ENCODE measurements at regions of chr3 and their contacts with region 1.

Region 1: GRCh38 chr3:56347219-56347871 is 120.9 kb downstream of the ERC2 start:
- DNase-seq: peak; percentile 71
- ATAC-seq: peak; percentile 47
- H3K4me3 Mint-ChIP-seq: no peak overlapping the region
- H3K27ac Mint-ChIP-seq: no peak overlapping the region
- H3K4me1 Mint-ChIP-seq: no peaks in the 10 kb centered on the region
- H3K27me3 Mint-ChIP-seq: peaks cover 8% of the 10 kb centered on the region

Region 2: DNA sequence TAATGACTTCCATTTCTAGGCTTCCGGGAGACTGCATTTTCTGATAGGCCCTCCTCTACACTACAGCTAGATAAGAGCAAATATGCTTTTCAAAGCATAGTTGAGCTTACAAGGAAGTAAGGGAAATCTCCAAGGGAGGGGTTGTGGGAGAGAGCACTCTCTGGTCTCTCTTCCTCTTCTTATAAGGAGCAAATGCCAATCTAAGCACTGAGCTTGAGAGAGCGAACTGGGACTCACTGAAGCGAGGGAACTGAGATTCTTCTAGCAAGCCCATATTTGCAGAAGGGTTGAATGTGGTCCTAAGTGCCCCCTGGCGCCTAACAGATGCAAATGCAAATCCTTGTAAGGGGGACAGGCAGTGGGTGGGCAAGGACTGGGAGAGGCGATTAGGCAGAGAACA is 43.9 kb before region 1 on chr3:
- CTCF ChIA-PET with region 1: no interaction called
- POLR2A ChIA-PET with region 1: no interaction called
- intact Hi-C with region 1: no loop called
- DNase-seq: peak; percentile 44
- ATAC-seq: no peak
- H3K4me3 Mint-ChIP-seq: no peak overlapping the region
- H3K27ac Mint-ChIP-seq: no peak overlapping the region
- H3K4me1 Mint-ChIP-seq: no peaks in the 10 kb centered on the region
- H3K27me3 Mint-ChIP-seq: peaks cover 24% of the 10 kb centered on the region

Region 3: GRCh38 chr3:56443372-56443771 is 96.0 kb after region 1 on chr3:
- CTCF ChIA-PET with region 1: no interaction called
- POLR2A ChIA-PET with region 1: no interaction called
- intact Hi-C with region 1: loop called in 1 of 2 experiments (anchors 1 kb)
- DNase-seq: no peak
- ATAC-seq: no peak
- H3K4me3 Mint-ChIP-seq: no peak overlapping the region
- H3K27ac Mint-ChIP-seq: no peak overlapping the region
- H3K4me1 Mint-ChIP-seq: no peaks in the 10 kb centered on the region
- H3K27me3 Mint-ChIP-seq: peaks cover 11% of the 10 kb centered on the region

Region 4: DNA sequence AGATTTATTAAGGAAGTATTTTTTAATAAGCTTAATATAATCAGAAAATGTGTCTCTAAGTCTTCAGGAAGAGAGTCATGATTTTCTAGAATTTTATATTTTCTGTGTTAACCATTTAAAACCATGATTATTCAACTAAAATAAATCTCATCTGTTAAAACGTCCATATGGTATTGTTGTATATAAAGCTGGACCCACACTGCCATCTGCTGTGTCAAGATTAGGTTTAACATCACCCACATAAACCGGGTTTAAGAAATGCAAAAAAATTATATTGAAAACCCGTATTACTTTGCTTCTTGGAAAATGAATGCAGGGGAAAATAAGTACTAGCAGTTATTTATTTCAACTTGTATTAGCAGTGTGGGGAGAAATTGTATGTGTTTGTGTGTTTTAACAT is 200.1 kb after region 1 on chr3:
- CTCF ChIA-PET with region 1: no interaction called
- POLR2A ChIA-PET with region 1: no interaction called
- intact Hi-C with region 1: loop called in 1 of 2 experiments (anchors 5 kb)
- DNase-seq: no peak
- ATAC-seq: no peak
- H3K4me3 Mint-ChIP-seq: no peak overlapping the region
- H3K27ac Mint-ChIP-seq: no peak overlapping the region
- H3K4me1 Mint-ChIP-seq: no peaks in the 10 kb centered on the region
- H3K27me3 Mint-ChIP-seq: peaks cover 7% of the 10 kb centered on the region

Measured in activated CD4-positive, alpha-beta T cell treated with anti-CD3 and anti-CD28 coated beads for 36 hours (primary cell).